Activated B cell treated with CpG ODN at 0.5 μM for 24 hours (primary cell): ENCODE measurements at regions of chr12 and their contacts with region 1.

Region 1: DNA sequence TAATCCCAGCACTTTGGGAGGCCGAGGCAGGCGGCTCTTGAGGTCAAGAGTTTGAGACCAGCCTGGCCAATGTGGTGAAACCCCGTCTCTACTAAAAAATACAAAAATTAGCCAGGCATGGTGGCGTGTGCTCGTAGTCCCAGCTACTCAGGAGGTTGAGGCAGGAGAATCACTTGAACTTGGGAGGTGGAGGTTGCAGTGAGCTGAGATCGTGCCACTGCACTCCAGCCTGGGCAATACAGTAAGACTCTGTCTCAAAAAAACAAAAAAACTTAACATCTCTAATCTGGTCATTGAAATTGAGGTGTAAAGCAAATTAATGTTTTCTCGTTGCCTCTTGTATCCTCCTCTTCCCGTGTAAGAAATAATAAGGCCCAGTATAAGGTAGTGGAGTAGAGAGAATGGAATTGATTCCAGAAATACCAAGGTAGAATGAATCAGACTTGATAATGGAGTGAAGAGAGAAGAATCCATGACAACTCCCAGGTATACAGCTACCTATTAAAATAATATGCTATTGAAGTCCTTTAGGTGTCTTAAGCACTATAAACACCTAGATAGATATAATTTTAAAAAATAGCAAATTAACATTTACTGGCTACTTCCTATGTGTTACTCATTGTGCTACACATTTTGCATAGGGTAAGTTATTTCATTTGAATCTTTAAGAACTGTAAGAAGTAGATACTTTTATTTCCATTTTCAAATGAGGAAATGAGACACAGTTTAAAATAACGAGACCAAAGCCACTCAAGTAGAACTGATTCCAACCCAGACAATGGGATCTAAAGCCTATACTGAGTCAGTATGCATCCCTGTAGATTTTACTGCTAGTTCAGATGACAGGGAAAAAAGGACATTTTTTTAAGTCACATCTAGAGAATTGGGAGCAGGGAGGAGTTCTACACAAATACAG is 23.2 kb downstream of the RAP1B start:
- DNase-seq: no peak
- ATAC-seq: peak; percentile 68
- H3K4me3 Mint-ChIP-seq: peak overlapping the region; percentile 32
- H3K27ac Mint-ChIP-seq: peak overlapping the region; percentile 68
- H3K4me1 Mint-ChIP-seq: peaks cover 93% of the 10 kb centered on the region
- H3K27me3 Mint-ChIP-seq: no peaks in the 10 kb centered on the region
- CTCF ChIP-seq: no peak

Region 2: GRCh38 chr12:68364893-68365725 is 268.8 kb before region 1 on chr12:
- CTCF ChIA-PET with region 1: no interaction called
- POLR2A ChIA-PET with region 1: no interaction called
- intact Hi-C with region 1: no loop called
- DNase-seq: peak; percentile 55
- ATAC-seq: peak; percentile 81
- H3K4me3 Mint-ChIP-seq: peak overlapping the region; percentile 82
- H3K27ac Mint-ChIP-seq: peak overlapping the region; percentile 88
- H3K4me1 Mint-ChIP-seq: peaks cover 53% of the 10 kb centered on the region
- H3K27me3 Mint-ChIP-seq: no peaks in the 10 kb centered on the region
- CTCF ChIP-seq: no peak

Region 3: GRCh38 chr12:68622250-68622649 is 11.6 kb before region 1 on chr12:
- CTCF ChIA-PET with region 1: no interaction called
- POLR2A ChIA-PET with region 1: interaction called, 4 read pairs
- intact Hi-C with region 1: loop called (anchors 1 kb)
- DNase-seq: no peak
- ATAC-seq: peak; percentile 47
- H3K4me3 Mint-ChIP-seq: peak overlapping the region; percentile 60
- H3K27ac Mint-ChIP-seq: peak overlapping the region; percentile 75
- H3K4me1 Mint-ChIP-seq: peaks cover 88% of the 10 kb centered on the region
- H3K27me3 Mint-ChIP-seq: no peaks in the 10 kb centered on the region
- CTCF ChIP-seq: no peak

Region 4: GRCh38 chr12:69024413-69024812 is 390.5 kb after region 1 on chr12:
- CTCF ChIA-PET with region 1: no interaction called
- POLR2A ChIA-PET with region 1: no interaction called
- intact Hi-C with region 1: no loop called
- DNase-seq: no peak
- ATAC-seq: no peak
- H3K4me3 Mint-ChIP-seq: no peak overlapping the region
- H3K27ac Mint-ChIP-seq: no peak overlapping the region
- H3K4me1 Mint-ChIP-seq: no peaks in the 10 kb centered on the region
- H3K27me3 Mint-ChIP-seq: peaks cover 5% of the 10 kb centered on the region
- CTCF ChIP-seq: no peak

Region 5: GRCh38 chr12:69527506-69528272 is 893.8 kb after region 1 on chr12:
- CTCF ChIA-PET with region 1: no interaction called
- POLR2A ChIA-PET with region 1: no interaction called
- intact Hi-C with region 1: no loop called
- DNase-seq: no peak
- ATAC-seq: no peak
- H3K4me3 Mint-ChIP-seq: no peak overlapping the region
- H3K27ac Mint-ChIP-seq: no peak overlapping the region
- H3K4me1 Mint-ChIP-seq: peaks cover 37% of the 10 kb centered on the region
- H3K27me3 Mint-ChIP-seq: no peaks in the 10 kb centered on the region
- CTCF ChIP-seq: no peak